Activated B cell treated with CpG ODN at 0.5 μM for 24 hours (primary cell): ENCODE measurements at regions of chr11 and their contacts with region 1.

Region 1: GRCh38 chr11:107928046-107928766 is at the start of gene RAB39A:
- DNase-seq: peak; percentile 82
- ATAC-seq: peak; percentile 87
- H3K4me3 Mint-ChIP-seq: peak within 1 kb of the TSS; percentile 91
- H3K27ac Mint-ChIP-seq: peak within 1 kb of the TSS; percentile 80
- H3K4me1 Mint-ChIP-seq: peaks cover 37% of the 10 kb centered on the region
- H3K27me3 Mint-ChIP-seq: peaks cover 4% of the 10 kb centered on the region
- CTCF ChIP-seq: no peak
- total RNA-seq, gene RAB39A: 3.6 and 4.1 TPM in 2 replicates

Region 2: DNA sequence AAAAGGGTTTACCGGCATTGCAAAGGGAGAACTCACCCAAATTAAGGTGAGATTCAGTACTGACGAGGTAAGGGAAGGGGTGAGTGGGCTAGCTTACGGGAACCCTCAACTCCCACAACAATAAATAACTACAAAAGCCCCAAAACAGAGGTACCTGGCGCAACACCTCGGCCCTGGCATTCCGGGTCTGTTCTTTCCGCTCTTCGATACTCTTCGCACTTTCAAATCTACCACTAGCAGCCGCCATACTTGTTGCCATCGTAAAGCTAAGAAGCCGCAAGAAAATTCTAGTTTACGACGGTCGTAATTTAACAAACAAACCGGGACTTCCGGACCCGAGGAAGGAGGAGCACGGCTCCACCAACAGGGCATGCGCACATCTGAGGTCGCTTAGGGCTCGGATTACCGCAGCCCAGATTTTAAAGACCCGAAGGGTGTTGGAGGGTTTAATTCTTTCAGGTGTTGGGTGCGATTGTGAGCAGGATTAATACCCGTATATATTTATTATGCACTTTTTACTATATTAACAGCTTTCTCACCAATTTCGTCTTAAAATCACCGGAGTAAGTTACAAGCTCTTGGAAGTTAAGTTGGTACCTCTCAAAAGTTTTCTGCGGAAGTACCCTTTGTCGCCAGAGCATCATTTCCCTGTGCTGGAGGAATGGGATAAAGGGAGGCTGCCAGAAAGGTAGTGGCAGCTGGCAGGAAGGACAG is 470.5 kb before region 1 on chr11 and contains the start of gene CWF19L2:
- CTCF ChIA-PET with region 1: no interaction called
- POLR2A ChIA-PET with region 1: interaction called, 3 read pairs
- intact Hi-C with region 1: loop called (anchors 1 kb)
- DNase-seq: peak; percentile 67
- ATAC-seq: peak; percentile 96
- H3K4me3 Mint-ChIP-seq: peak within 1 kb of the TSS; percentile 90
- H3K27ac Mint-ChIP-seq: peak within 1 kb of the TSS; percentile 93
- H3K4me1 Mint-ChIP-seq: peaks cover 25% of the 10 kb centered on the region
- H3K27me3 Mint-ChIP-seq: peaks cover 3% of the 10 kb centered on the region
- CTCF ChIP-seq: no peak
- total RNA-seq, gene CWF19L2: 24.5 and 26.1 TPM in 2 replicates

Region 3: DNA sequence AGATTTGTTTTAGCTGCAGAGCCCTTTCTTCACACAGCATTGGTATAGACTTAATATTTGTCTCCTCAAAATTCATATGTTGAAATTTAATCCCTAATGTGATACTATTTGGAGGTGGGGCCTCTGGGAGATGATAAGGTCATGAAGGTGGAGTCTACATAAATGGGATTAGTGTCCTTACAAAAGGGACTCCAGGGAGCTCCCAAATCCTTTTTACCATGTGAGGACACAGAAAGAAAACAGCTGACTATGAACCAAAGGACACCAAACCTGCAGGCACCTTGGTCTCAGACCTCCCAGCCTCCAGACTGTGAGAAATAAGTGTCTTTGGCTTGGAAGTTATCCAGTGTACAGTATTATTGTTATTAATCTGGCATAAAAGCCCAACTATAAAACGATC is 79.9 kb before region 1 on chr11:
- CTCF ChIA-PET with region 1: no interaction called
- POLR2A ChIA-PET with region 1: no interaction called
- intact Hi-C with region 1: loop called (anchors 1 kb)
- DNase-seq: no peak
- ATAC-seq: no peak
- H3K4me3 Mint-ChIP-seq: no peak overlapping the region
- H3K27ac Mint-ChIP-seq: no peak overlapping the region
- H3K4me1 Mint-ChIP-seq: peaks cover 30% of the 10 kb centered on the region
- H3K27me3 Mint-ChIP-seq: no peaks in the 10 kb centered on the region
- CTCF ChIP-seq: no peak

Region 4: GRCh38 chr11:108008656-108009496 is 80.7 kb after region 1 on chr11 and contains the start of gene CUL5:
- CTCF ChIA-PET with region 1: no interaction called
- POLR2A ChIA-PET with region 1: interaction called, 6 read pairs
- intact Hi-C with region 1: loop called (anchors 1 kb)
- DNase-seq: peak; percentile 89
- ATAC-seq: peak; percentile 87
- H3K4me3 Mint-ChIP-seq: peak within 1 kb of the TSS; percentile 99
- H3K27ac Mint-ChIP-seq: peak within 1 kb of the TSS; percentile 96
- H3K4me1 Mint-ChIP-seq: peaks cover 10% of the 10 kb centered on the region
- H3K27me3 Mint-ChIP-seq: no peaks in the 10 kb centered on the region
- CTCF ChIP-seq: no peak
- total RNA-seq, gene CUL5: 38.4 and 42.0 TPM in 2 replicates

Region 5: GRCh38 chr11:108497317-108498045 is 569.3 kb after region 1 on chr11:
- CTCF ChIA-PET with region 1: no interaction called
- POLR2A ChIA-PET with region 1: no interaction called
- intact Hi-C with region 1: loop called (anchors 2 kb)
- DNase-seq: peak; percentile 51
- ATAC-seq: peak; percentile 71
- H3K4me3 Mint-ChIP-seq: peak overlapping the region; percentile 100
- H3K27ac Mint-ChIP-seq: peak overlapping the region; percentile 97
- H3K4me1 Mint-ChIP-seq: peaks cover 15% of the 10 kb centered on the region
- H3K27me3 Mint-ChIP-seq: no peaks in the 10 kb centered on the region
- CTCF ChIP-seq: no peak